ENCODE measurements at regions of chr12 and their contacts with region 1.

Region 1: GRCh38 chr12:52655720-52656124 is 3.7 kb upstream of the KRT2 start:
- DNase-seq: peak; percentile 51
- H3K4me3 ChIP-seq: no peak overlapping the region
- H3K27ac ChIP-seq: no peak overlapping the region
- H3K4me1 ChIP-seq: peaks cover 13% of the 10 kb centered on the region
- H3K27me3 ChIP-seq: no peaks in the 10 kb centered on the region
- CTCF ChIP-seq: no peak

Region 2: DNA sequence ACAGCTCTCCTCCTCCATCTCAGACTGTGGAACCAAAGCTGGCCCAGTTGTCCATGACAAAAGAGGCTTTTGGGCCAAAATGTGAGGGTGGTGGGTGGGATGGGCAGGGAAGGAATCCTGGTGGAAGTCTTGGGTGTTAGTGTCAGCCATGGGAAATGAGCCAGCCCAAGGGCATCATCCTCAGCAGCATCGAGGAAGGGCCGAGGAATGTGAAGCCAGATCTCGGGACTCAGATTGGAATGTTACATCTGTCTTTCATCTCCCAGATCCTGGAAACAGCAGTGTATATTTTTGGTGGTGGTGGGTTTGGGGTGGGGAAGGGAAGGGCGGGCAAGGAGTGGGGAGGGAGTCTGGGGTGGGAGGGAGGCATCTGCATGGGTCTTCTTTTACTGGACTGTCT is 660.8 kb before region 1 on chr12:
- CTCF ChIA-PET with region 1: interaction called, 10 read pairs
- dilution Hi-C with region 1: no loop called
- in situ Hi-C with region 1: no loop called
- intact Hi-C with region 1: no loop called
- DNase-seq: no peak
- H3K4me3 ChIP-seq: no peak overlapping the region
- H3K27ac ChIP-seq: no peak overlapping the region
- H3K4me1 ChIP-seq: no peaks in the 10 kb centered on the region
- H3K27me3 ChIP-seq: no peaks in the 10 kb centered on the region
- CTCF ChIP-seq: no peak

Region 3: GRCh38 chr12:52178984-52179383 is 476.7 kb before region 1 on chr12:
- CTCF ChIA-PET with region 1: interaction called, 14 read pairs
- dilution Hi-C with region 1: no loop called
- in situ Hi-C with region 1: no loop called
- intact Hi-C with region 1: no loop called
- DNase-seq: no peak
- H3K4me3 ChIP-seq: no peak overlapping the region
- H3K27ac ChIP-seq: no peak overlapping the region
- H3K4me1 ChIP-seq: peaks cover 28% of the 10 kb centered on the region
- H3K27me3 ChIP-seq: no peaks in the 10 kb centered on the region
- CTCF ChIP-seq: no peak

Region 4: DNA sequence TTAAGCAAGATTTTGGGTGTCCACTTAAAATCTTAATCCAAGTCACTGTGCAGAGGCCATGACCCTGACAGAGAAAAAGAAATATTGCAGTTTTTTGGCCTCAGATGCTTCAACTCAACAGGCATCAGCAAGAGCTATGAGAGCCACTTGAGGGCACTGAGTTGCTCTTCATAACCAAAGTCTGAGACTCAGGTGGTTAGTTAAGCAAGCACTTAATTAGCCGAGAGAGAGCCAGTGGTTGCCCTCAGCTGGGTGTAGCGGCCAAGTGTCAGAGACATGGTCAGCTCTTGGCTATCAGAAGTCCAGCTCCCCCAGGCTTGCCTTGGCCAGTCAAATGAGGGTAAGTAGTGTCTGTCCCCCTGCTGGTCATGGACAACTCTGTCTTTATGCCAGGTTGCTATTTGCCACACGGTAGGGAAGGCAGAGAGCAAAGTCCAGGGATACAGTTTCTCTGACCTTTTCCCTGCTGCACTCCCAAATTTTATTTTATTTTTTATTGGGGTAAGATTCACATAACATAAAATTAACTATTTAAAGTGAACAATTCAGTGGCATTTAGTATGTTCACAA is 93.8 kb before region 1 on chr12:
- CTCF ChIA-PET with region 1: no interaction called
- dilution Hi-C with region 1: no loop called
- in situ Hi-C with region 1: no loop called
- intact Hi-C with region 1: no loop called
- DNase-seq: no peak
- H3K4me3 ChIP-seq: no peak overlapping the region
- H3K27ac ChIP-seq: no peak overlapping the region
- H3K4me1 ChIP-seq: no peaks in the 10 kb centered on the region
- H3K27me3 ChIP-seq: no peaks in the 10 kb centered on the region
- CTCF ChIP-seq: peak; percentile 30 to 33

Region 5: DNA sequence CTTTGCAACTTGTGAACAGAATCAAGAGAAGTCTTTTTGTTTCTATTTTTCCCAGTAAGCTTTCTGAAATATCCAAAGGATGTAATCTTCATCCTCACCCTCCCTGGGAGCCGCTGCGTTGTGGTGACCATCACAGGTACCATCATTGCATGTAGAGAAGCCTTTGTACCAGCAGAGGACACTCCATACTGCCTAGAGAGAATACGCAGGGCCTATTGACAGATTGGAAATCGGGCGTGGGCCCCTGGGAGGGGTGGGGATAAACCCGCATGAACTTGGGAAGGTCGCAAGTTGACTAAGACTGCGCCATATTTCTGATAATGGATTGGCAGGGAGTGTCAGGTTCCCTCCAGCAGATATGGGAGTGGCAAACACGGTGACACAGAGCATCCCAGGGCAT is 11.8 kb after region 1 on chr12:
- CTCF ChIA-PET with region 1: no interaction called
- dilution Hi-C with region 1: no loop called
- in situ Hi-C with region 1: no loop called
- intact Hi-C with region 1: loop called (anchors 2 kb)
- DNase-seq: no peak
- H3K4me3 ChIP-seq: no peak overlapping the region
- H3K27ac ChIP-seq: no peak overlapping the region
- H3K4me1 ChIP-seq: peaks cover 18% of the 10 kb centered on the region
- H3K27me3 ChIP-seq: peaks cover 2% of the 10 kb centered on the region
- CTCF ChIP-seq: peak in 1 of 2 donors; percentile 40

Region 6: DNA sequence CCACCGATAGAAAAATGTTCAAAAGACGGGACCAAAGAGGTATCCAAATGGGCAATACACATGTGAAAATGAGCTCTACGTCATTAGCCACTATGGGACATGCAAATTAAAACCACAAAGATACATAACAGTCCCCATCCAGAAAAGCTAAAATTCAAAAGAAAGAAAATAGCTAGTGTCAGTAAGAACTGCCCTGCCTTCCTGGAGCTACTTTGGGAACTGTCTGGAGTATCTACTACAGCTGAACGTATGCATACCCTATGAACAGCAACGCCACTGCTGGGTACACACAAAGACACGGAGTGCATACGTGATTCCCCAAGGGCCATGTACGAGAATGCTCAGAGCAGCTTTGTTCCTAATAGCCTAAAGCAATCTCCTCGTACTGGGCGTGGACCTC is 73.4 kb after region 1 on chr12:
- CTCF ChIA-PET with region 1: no interaction called
- dilution Hi-C with region 1: no loop called
- in situ Hi-C with region 1: no loop called
- intact Hi-C with region 1: no loop called
- DNase-seq: no peak
- H3K4me3 ChIP-seq: no peak overlapping the region
- H3K27ac ChIP-seq: no peak overlapping the region
- H3K4me1 ChIP-seq: no peaks in the 10 kb centered on the region
- H3K27me3 ChIP-seq: peaks cover 4% of the 10 kb centered on the region
- CTCF ChIP-seq: no peak

Measured in mammary epithelial cell (primary cell).